BJ (cell line): ENCODE measurements at regions of chr17 and their contacts with region 1.

Region 1: GRCh38 chr17:7989781-7990655 is 12.4 kb upstream of the GUCY2D start:
- DNase-seq: no peak
- H3K4me3 ChIP-seq: peak overlapping the region; percentile 74
- H3K27me3 ChIP-seq: peaks cover 2% of the 10 kb centered on the region; the same call in 1 of the 2 replicates
- CTCF ChIP-seq: peak; percentile 98

Region 2: DNA sequence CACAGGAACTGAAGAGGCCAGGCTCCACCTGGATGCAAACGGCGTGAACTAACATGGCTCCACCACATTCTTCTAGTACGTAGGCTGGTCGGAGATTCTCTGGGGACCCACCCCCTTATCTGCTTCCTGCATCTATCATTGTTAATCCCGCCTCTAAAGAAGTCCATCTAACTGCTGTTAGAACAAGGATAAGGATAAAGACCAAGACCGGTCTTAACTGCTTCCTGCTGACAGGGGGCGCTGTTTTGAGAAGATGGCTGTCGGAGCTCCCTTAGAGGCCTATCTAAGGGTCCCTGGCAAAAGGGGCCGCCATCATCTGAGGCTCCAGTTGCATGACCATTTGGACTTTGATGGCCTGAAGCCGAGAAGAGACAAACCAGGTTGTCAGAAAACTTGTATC is 467.0 kb before region 1 on chr17:
- CTCF ChIA-PET with region 1: no interaction called
- POLR2A ChIA-PET with region 1: no interaction called
- DNase-seq: no peak
- H3K4me3 ChIP-seq: no peak overlapping the region
- H3K27me3 ChIP-seq: no peaks in the 10 kb centered on the region
- CTCF ChIP-seq: peak; percentile 40

Region 3: GRCh38 chr17:7745748-7746470 is 244.1 kb before region 1 on chr17:
- CTCF ChIA-PET with region 1: interaction called, 14 read pairs
- POLR2A ChIA-PET with region 1: no interaction called
- DNase-seq: peak; percentile 52
- H3K4me3 ChIP-seq: no peak overlapping the region
- H3K27me3 ChIP-seq: no peaks in the 10 kb centered on the region
- CTCF ChIP-seq: 0 out of 2 replicates have a peak, but pooled peaks have one; percentile 13

Region 4: DNA sequence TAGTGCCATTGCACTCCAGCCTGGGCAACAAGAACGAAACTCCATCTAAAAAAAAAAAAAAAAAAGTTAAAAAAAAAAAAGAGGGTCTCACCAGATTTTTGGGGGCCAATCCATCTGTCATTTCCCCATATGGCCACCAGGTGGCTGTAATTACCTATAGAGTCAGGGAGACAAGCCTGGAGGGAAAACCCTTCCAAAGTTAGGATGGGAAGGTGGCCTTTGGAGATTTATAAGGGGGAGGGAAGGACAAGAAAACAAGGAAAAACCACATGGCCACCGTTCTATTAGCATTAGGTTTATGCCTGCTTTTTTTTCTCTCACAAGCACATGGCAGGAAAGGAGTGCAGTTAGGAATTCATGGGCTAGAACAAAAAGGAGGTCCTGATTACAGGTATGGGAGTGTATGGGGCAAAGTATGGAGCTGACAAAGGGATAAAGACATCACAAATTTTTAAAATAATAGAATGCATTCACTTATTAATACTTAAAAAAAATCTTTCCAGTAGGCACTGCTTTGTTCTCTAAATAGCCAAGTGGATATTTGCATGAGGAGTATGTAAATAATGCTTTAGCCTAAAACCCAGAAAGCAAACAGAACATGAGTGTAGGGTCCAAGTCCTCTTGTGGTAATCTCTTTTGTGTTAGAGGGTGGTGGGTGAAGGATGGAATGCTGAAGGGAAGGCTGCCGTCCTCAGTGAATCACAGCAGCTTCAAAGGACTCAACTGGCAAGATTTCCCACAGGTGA is 127.2 kb before region 1 on chr17:
- CTCF ChIA-PET with region 1: interaction called, 32 read pairs
- POLR2A ChIA-PET with region 1: no interaction called
- DNase-seq: no peak
- H3K4me3 ChIP-seq: no peak overlapping the region
- H3K27me3 ChIP-seq: no peaks in the 10 kb centered on the region
- CTCF ChIP-seq: peak; percentile 63

Region 5: DNA sequence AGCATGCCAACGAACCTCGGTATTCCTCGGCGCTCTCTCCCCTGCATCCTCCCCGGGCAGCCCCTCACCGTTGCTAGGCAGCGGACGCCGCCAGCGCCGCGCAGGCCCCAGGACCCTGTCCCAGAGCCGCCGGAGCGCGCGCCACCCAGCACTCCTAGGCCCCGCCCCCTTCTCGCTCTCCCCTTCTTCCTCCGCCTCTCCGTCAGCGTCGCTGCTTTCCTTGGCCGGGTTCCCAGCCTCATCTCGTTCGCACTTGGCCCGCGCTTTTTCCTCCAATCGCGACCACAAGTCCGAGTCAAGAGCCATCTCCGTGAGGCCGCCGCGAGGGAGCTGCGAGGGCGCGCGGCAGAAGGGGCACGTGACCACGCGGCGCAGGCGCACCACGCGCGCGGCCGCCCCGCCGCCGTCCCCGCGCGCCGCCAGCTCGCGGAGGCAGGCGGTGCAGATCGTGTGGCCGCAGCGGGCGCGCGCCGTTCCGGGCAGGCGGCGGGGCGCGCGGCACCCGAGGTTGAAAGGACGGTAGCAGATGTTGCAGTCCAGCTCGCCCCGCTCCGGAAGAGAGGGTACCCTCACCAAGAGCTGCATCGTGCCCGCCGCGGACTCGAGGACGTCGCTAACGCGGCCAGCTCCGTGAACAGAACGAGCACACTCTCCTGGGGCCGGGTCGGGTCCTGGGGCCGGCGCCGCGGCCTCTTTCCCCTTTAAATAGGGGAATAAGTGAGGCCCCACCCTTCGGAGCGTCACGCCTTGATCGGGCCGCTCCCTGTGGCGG is 74.2 kb before region 1 on chr17 and contains the start of gene RNF227:
- CTCF ChIA-PET with region 1: interaction called, 109 read pairs
- POLR2A ChIA-PET with region 1: no interaction called
- DNase-seq: peak; percentile 82
- H3K4me3 ChIP-seq: peak within 1 kb of the TSS; percentile 52
- H3K27me3 ChIP-seq: no peaks in the 10 kb centered on the region
- CTCF ChIP-seq: no peak
- polyA plus RNA-seq, gene RNF227: 2.2 and 2.9 TPM in 2 replicates

Region 6: GRCh38 chr17:7944326-7944725 is 45.7 kb before region 1 on chr17:
- CTCF ChIA-PET with region 1: interaction called, 12 read pairs
- POLR2A ChIA-PET with region 1: no interaction called
- DNase-seq: no peak
- H3K4me3 ChIP-seq: no peak overlapping the region
- H3K27me3 ChIP-seq: no peaks in the 10 kb centered on the region
- CTCF ChIP-seq: no peak

Region 7: DNA sequence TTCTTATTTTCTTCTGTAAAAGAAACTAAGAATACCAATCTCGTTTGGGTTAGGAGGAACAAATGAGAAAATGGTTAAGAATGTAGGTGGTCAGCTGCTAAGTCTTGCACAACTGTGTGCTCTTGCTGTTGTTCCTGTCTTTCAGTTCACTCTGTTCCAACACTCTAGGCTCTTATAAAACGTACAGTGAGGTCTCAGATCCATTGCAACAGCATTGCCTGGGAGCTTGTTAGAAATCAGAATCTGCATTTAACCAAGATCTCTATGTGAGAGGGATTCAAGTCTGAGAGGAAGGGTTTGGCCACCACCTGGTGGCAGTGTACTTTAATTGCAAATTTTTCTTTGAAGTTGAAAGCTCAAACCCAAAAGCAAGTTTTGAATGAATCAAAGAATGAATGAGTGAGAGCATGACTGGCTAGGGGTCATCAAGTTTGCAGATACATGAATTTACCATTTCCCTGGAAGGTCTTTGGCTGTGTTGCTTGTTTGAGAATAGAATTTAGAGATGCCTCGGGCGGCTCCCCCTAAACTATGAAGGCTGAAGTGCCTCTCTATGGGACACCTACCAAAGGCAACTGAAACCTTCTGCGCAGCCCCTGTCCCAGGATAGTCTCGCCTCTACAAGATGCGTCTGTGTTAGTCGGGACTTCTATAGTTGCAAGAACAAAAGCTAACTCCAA is 51.4 kb after region 1 on chr17:
- CTCF ChIA-PET with region 1: interaction called, 37 read pairs
- POLR2A ChIA-PET with region 1: no interaction called
- DNase-seq: peak; percentile 13
- H3K4me3 ChIP-seq: no peak overlapping the region
- H3K27me3 ChIP-seq: peaks cover 17% of the 10 kb centered on the region
- CTCF ChIP-seq: peak; percentile 62

Region 8: GRCh38 chr17:8062807-8063483 is 72.9 kb after region 1 on chr17:
- CTCF ChIA-PET with region 1: interaction called, 33 read pairs
- POLR2A ChIA-PET with region 1: no interaction called
- DNase-seq: no peak
- H3K4me3 ChIP-seq: no peak overlapping the region
- H3K27me3 ChIP-seq: peaks cover 46% of the 10 kb centered on the region
- CTCF ChIP-seq: no peak